ENCODE measurements at regions of chr10 and their contacts with region 1.

Region 1: GRCh38 chr10:29585488-29585980 is 49.2 kb downstream of the SVIL start:
- DNase-seq: peak; percentile 60
- H3K4me3 ChIP-seq: no peak overlapping the region
- H3K27ac ChIP-seq: peak overlapping the region; percentile 32
- H3K4me1 ChIP-seq: peaks cover 26% of the 10 kb centered on the region
- H3K27me3 ChIP-seq: no peaks in the 10 kb centered on the region
- CTCF ChIP-seq: no peak
- POLR2A ChIP-seq: no peak

Region 2: DNA sequence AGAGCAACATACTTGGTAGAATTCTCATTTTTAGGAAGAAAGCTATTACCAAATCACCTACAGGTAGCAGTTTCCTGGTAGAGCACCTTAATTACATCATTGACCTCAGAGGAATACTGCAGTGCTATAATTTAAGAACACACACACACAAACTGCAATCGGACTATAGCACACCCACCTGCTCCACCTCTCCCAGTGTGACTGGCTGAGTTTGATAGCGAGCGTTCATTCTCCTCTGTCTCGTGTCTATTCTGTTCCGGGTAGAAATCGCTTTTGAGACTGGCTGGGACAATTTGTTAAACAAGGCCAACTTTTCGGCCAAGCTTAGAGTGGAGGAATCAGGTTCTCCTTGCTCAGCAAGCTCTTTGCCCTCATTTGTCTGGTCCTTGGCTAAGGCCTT is 61.2 kb before region 1 on chr10:
- CTCF ChIA-PET with region 1: no interaction called
- POLR2A ChIA-PET with region 1: no interaction called
- dilution Hi-C with region 1: no loop called
- intact Hi-C with region 1: no loop called
- DNase-seq: no peak
- H3K4me3 ChIP-seq: no peak overlapping the region
- H3K27ac ChIP-seq: no peak overlapping the region
- H3K4me1 ChIP-seq: no peaks in the 10 kb centered on the region
- H3K27me3 ChIP-seq: no peaks in the 10 kb centered on the region
- CTCF ChIP-seq: no peak
- POLR2A ChIP-seq: no peak

Region 3: DNA sequence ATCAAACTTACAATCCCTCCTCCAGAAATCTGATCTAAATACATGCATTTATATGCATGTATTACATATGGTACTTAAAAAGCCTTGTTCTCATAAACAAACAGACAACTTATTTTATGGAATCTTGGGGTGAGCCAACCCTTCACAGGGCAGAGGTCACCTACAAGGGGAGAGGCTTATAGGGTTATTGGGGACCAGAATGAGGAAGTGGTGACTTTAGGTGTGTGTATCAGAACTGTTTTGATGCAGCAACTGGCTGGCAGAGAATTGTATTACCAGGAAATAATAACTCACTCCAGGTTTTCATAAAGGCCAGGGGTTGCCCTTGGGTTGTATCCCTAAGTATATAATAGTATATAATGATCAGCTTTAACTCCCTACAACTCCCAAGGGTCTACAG is 41.8 kb before region 1 on chr10:
- CTCF ChIA-PET with region 1: interaction called, 3 read pairs
- POLR2A ChIA-PET with region 1: interaction called, 16 read pairs
- dilution Hi-C with region 1: no loop called
- intact Hi-C with region 1: no loop called
- DNase-seq: no peak
- H3K4me3 ChIP-seq: no peak overlapping the region
- H3K27ac ChIP-seq: no peak overlapping the region
- H3K4me1 ChIP-seq: no peaks in the 10 kb centered on the region
- H3K27me3 ChIP-seq: no peaks in the 10 kb centered on the region
- CTCF ChIP-seq: no peak
- POLR2A ChIP-seq: no peak

Region 4: GRCh38 chr10:29669149-29669548 is 83.6 kb after region 1 on chr10:
- CTCF ChIA-PET with region 1: no interaction called
- POLR2A ChIA-PET with region 1: no interaction called
- dilution Hi-C with region 1: no loop called
- intact Hi-C with region 1: no loop called
- DNase-seq: peak; percentile 78
- H3K4me3 ChIP-seq: no peak overlapping the region
- H3K27ac ChIP-seq: peak overlapping the region; percentile 58
- H3K4me1 ChIP-seq: peaks cover 31% of the 10 kb centered on the region
- H3K27me3 ChIP-seq: no peaks in the 10 kb centered on the region
- CTCF ChIP-seq: peak in 1 of 2 donors; percentile 17
- POLR2A ChIP-seq: peak; percentile 32